CD4-positive, alpha-beta T cell (primary cell): ENCODE measurements at regions of chr21 and their contacts with region 1.

Region 1: DNA sequence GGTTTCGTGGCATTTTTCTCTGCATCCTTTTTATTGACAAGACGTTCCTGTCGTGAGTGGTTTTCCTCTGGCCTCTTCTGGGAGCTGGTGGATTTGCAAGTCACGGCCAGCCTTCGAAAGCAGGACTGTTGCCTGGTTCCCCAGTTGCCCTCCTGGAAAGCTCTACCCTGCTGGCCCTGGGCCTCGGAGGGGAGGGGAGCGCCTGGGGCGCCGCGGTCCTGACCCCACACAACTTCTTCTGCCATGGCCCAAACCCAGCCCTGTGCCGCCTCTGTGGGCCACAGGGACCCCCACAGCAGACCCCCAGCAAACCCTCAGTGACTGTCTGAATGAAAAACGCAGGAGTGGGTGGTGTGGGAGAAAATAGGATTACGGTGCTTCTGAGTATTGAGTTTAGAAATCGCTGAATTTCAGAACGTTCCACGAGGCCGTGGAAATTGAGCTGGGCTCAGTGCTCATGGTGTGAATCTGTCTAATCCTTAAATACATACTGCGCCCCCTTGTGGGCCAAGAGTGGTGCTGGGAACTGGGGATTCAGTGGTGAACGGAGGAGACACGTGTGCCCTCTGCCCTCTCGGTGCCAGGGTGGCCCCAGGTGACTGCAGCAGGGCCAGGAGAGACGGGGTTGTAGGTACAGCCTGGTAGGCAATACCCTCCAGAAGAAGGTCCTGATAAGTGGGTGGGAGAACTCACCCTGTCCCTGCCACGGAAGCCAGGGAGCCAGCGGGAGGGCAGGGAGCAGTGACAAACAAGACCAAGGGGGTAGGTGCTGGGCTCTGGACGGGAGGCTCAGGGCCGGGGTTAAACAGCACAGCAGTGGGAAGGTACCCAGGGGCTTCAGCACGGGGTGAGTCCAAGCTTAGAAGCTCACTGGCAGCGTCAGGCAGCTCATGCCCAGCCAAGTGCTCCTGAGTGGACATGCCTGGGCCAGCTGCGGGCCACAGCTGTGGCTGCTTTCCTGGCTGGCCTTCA is 101.2 kb upstream of the COL6A1 start:
- DNase-seq: peak; percentile 52 to 83 (median 66)
- ATAC-seq: peak; percentile 91
- H3K4me3 ChIP-seq: no peak overlapping the region
- H3K4me3 Mint-ChIP-seq: peak overlapping the region; percentile 26
- H3K27ac ChIP-seq: no peak overlapping the region
- H3K27ac Mint-ChIP-seq: peak overlapping the region; percentile 53
- H3K4me1 ChIP-seq: peaks cover 37% of the 10 kb centered on the region
- H3K4me1 Mint-ChIP-seq: peaks cover 66% of the 10 kb centered on the region
- H3K27me3 ChIP-seq: no peaks in the 10 kb centered on the region
- H3K27me3 Mint-ChIP-seq: no peaks in the 10 kb centered on the region
- CTCF ChIP-seq: peak; percentile 65

Region 2: GRCh38 chr21:45820171-45821091 is 60.0 kb before region 1 on chr21:
- CTCF ChIA-PET with region 1: no interaction called
- POLR2A ChIA-PET with region 1: no interaction called
- intact Hi-C with region 1: no loop called
- DNase-seq: peak; percentile 73 to 90 (median 76)
- ATAC-seq: peak; percentile 66
- H3K4me3 ChIP-seq: no peak overlapping the region
- H3K4me3 Mint-ChIP-seq: no peak overlapping the region
- H3K27ac ChIP-seq: no peak overlapping the region
- H3K27ac Mint-ChIP-seq: peak overlapping the region; percentile 28
- H3K4me1 ChIP-seq: peaks cover 17% of the 10 kb centered on the region
- H3K4me1 Mint-ChIP-seq: peaks cover 25% of the 10 kb centered on the region
- H3K27me3 ChIP-seq: no peaks in the 10 kb centered on the region
- H3K27me3 Mint-ChIP-seq: no peaks in the 10 kb centered on the region
- CTCF ChIP-seq: peak; percentile 91

Region 3: GRCh38 chr21:45854690-45855247 is 25.6 kb before region 1 on chr21:
- CTCF ChIA-PET with region 1: no interaction called
- POLR2A ChIA-PET with region 1: no interaction called
- intact Hi-C with region 1: no loop called
- DNase-seq: peak in 1 of 14 experiments; percentile 16
- ATAC-seq: no peak
- H3K4me3 ChIP-seq: no peak overlapping the region
- H3K4me3 Mint-ChIP-seq: no peak overlapping the region
- H3K27ac ChIP-seq: no peak overlapping the region
- H3K27ac Mint-ChIP-seq: no peak overlapping the region
- H3K4me1 ChIP-seq: no peaks in the 10 kb centered on the region
- H3K4me1 Mint-ChIP-seq: no peaks in the 10 kb centered on the region
- H3K27me3 ChIP-seq: no peaks in the 10 kb centered on the region
- H3K27me3 Mint-ChIP-seq: no peaks in the 10 kb centered on the region
- CTCF ChIP-seq: no peak

Region 4: GRCh38 chr21:45892156-45892902 is 11.9 kb after region 1 on chr21:
- CTCF ChIA-PET with region 1: interaction called, 6 read pairs
- POLR2A ChIA-PET with region 1: interaction called, 6 read pairs
- intact Hi-C with region 1: loop called in 1 of 2 experiments (anchors 1 kb)
- DNase-seq: peak in 6 of 14 experiments; percentile 11 to 56 (median 36)
- ATAC-seq: peak; percentile 51
- H3K4me3 ChIP-seq: no peak overlapping the region
- H3K4me3 Mint-ChIP-seq: peak overlapping the region; percentile 64
- H3K27ac ChIP-seq: no peak overlapping the region
- H3K27ac Mint-ChIP-seq: peak overlapping the region; percentile 82
- H3K4me1 ChIP-seq: peaks cover 67% of the 10 kb centered on the region
- H3K4me1 Mint-ChIP-seq: peaks cover 58% of the 10 kb centered on the region
- H3K27me3 ChIP-seq: no peaks in the 10 kb centered on the region
- H3K27me3 Mint-ChIP-seq: no peaks in the 10 kb centered on the region
- CTCF ChIP-seq: no peak

Region 5: DNA sequence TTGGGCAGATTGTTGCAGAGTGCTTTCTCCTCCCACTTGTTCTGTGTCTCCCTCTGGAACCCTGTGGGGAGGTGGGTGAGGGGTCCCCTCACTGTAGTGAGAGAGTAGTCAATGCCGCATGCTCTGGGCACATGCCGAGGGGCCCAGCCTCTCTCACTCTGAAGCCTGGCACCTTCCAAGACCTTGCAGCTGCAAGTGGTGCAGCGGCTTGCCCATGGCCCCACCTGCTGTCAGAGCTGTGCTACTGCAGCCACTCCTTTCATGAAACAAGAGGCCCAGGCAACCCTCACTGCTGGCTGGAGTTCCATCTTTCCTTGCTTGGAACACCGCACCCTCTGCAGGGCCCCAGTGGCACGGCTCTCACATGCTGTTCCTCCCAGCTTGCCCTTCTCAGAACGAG is 42.8 kb after region 1 on chr21:
- CTCF ChIA-PET with region 1: no interaction called
- POLR2A ChIA-PET with region 1: interaction called, 5 read pairs
- intact Hi-C with region 1: loop called (anchors 2 to 5 kb)
- DNase-seq: peak; percentile 56 to 81 (median 69)
- ATAC-seq: peak; percentile 98
- H3K4me3 ChIP-seq: no peak overlapping the region
- H3K4me3 Mint-ChIP-seq: no peak overlapping the region
- H3K27ac ChIP-seq: no peak overlapping the region
- H3K27ac Mint-ChIP-seq: no peak overlapping the region
- H3K4me1 ChIP-seq: peaks cover 18% of the 10 kb centered on the region
- H3K4me1 Mint-ChIP-seq: peaks cover 4% of the 10 kb centered on the region
- H3K27me3 ChIP-seq: no peaks in the 10 kb centered on the region
- H3K27me3 Mint-ChIP-seq: no peaks in the 10 kb centered on the region
- CTCF ChIP-seq: peak; percentile 75

Region 6: DNA sequence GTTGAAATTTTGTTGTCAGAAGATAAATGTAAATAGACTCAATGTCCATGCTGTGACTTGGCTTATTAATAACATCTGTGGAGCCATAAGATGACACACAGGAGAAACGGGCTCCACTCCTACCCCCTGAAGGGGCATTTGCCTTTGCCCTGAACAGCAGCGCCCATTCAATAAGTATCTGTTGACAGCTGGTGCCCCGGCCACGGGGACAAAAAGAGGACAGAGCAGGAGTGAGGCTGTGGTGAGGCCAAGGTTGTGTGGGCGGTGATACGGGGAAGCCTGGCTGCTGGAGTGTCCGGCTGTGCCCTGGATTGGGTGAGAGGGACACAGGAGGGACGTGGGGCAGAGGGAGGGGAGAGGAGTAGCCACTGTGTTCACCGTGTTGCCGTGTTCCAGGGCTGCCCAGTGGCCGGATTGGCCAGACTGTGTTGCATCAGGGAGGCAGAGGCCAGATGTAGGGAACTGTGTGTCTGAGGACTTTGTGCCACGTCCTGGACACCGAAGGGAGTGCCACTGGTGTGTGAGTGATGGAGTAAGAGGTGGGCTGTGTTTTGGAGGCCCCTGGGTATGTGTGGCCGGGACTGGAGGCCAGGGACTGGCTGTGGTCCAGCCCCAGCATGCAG is 770.2 kb after region 1 on chr21:
- CTCF ChIA-PET with region 1: no interaction called
- POLR2A ChIA-PET with region 1: no interaction called
- intact Hi-C with region 1: no loop called
- DNase-seq: no peak
- ATAC-seq: no peak
- H3K4me3 ChIP-seq: no peak overlapping the region
- H3K4me3 Mint-ChIP-seq: no peak overlapping the region
- H3K27ac ChIP-seq: no peak overlapping the region
- H3K27ac Mint-ChIP-seq: peak overlapping the region; percentile 42
- H3K4me1 ChIP-seq: peaks cover 27% of the 10 kb centered on the region
- H3K4me1 Mint-ChIP-seq: peaks cover 47% of the 10 kb centered on the region
- H3K27me3 ChIP-seq: no peaks in the 10 kb centered on the region
- H3K27me3 Mint-ChIP-seq: no peaks in the 10 kb centered on the region
- CTCF ChIP-seq: no peak